Activated CD4-positive, alpha-beta memory T cell treated with anti-CD3 and anti-CD28 coated beads, Interleukin-2, amount 10 ng/mL, durations not matched to agents 7 days and 5 days (primary cell): ENCODE measurements at regions of chr14 and their contacts with region 1.

Region 1: GRCh38 chr14:74762917-74763802 is at the start of gene YLPM1:
- DNase-seq: peak; percentile 92
- H3K4me3 Mint-ChIP-seq: peak within 1 kb of the TSS; percentile 87
- H3K27ac Mint-ChIP-seq: peak within 1 kb of the TSS; percentile 77
- H3K4me1 Mint-ChIP-seq: peaks cover 43% of the 10 kb centered on the region
- H3K27me3 Mint-ChIP-seq: no peaks in the 10 kb centered on the region
- total RNA-seq, gene YLPM1: 52.3 to 55.4 TPM

Region 2: GRCh38 chr14:74377976-74378655 is 385.0 kb before region 1 on chr14:
- CTCF ChIA-PET with region 1: no interaction called
- POLR2A ChIA-PET with region 1: no interaction called
- DNase-seq: no peak
- H3K4me3 Mint-ChIP-seq: no peak overlapping the region
- H3K27ac Mint-ChIP-seq: no peak overlapping the region
- H3K4me1 Mint-ChIP-seq: no peaks in the 10 kb centered on the region
- H3K27me3 Mint-ChIP-seq: peaks cover 2% of the 10 kb centered on the region

Region 3: DNA sequence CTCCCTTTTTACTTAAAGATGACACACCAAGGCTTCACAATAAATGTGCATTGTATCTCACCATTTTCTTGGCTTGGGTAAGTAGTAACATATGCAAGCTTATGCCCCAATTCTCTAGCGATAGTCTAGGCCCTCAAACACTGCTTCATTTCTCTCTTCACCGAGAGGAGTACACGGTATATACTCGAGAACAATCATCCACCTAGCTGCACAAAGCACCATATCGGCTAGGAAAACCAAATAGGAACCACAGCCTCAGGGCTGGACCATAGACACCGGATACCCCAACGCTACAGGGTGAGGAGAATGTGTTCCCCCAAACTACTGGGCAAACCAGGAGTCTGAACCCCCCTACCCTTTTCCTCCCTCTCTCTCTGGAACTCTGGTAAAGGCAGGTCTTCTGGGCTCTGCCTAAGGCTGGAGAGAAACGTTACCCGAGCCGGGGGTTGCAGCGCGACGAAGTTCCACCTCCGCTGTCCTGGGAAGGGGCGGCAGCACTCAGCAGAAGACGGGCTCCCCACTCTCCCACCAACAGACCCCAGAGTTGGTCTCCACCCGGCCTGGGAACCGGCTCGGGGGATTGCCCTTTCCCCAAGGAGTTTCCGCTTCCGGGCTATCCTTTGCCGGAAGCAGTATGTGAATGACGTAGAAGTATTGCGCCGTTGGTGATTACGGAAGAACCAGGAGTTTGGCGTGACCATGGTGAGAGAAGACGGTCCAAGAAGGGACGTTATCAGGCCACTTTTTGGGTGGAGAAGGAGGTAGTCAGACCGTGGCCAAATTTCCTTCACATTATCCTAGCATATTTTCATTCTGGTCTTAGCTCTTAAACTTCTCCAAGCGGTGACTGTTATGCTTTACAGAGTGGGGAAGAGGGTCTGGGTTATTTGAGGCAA is 50.4 kb before region 1 on chr14 and contains the starts of genes AREL1 and FCF1:
- CTCF ChIA-PET with region 1: interaction called, 3 read pairs
- POLR2A ChIA-PET with region 1: interaction called, 13 read pairs
- DNase-seq: peak; percentile 87
- H3K4me3 Mint-ChIP-seq: peak within 1 kb of the TSS; percentile 95
- H3K27ac Mint-ChIP-seq: peak within 1 kb of the TSS; percentile 85
- H3K4me1 Mint-ChIP-seq: peaks cover 47% of the 10 kb centered on the region
- H3K27me3 Mint-ChIP-seq: no peaks in the 10 kb centered on the region
- total RNA-seq, gene AREL1: 42.4 to 43.1 TPM
- total RNA-seq, gene FCF1: 56.6 to 58.6 TPM

Region 4: DNA sequence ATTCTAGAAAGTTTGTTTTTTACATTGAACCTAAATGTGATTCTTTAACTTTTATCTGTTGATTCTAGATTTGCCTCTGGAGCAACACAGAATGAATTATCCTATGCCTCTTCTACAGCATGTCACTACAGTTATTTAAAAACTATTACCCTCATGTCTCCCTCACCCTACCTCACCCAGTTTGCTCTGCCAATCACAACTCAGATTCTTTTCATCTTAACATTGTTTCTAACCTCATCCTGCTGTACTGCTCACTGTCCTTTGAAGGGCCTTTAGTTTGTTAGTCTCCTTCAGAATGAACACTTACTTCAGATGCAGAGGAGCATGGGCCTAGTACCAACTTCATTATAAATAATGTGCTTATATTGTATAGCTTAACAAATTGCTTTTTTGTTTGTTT is 21.5 kb after region 1 on chr14:
- CTCF ChIA-PET with region 1: interaction called, 9 read pairs
- POLR2A ChIA-PET with region 1: interaction called, 11 read pairs
- DNase-seq: no peak
- H3K4me3 Mint-ChIP-seq: no peak overlapping the region
- H3K27ac Mint-ChIP-seq: no peak overlapping the region
- H3K4me1 Mint-ChIP-seq: peaks cover 10% of the 10 kb centered on the region
- H3K27me3 Mint-ChIP-seq: no peaks in the 10 kb centered on the region

Region 5: DNA sequence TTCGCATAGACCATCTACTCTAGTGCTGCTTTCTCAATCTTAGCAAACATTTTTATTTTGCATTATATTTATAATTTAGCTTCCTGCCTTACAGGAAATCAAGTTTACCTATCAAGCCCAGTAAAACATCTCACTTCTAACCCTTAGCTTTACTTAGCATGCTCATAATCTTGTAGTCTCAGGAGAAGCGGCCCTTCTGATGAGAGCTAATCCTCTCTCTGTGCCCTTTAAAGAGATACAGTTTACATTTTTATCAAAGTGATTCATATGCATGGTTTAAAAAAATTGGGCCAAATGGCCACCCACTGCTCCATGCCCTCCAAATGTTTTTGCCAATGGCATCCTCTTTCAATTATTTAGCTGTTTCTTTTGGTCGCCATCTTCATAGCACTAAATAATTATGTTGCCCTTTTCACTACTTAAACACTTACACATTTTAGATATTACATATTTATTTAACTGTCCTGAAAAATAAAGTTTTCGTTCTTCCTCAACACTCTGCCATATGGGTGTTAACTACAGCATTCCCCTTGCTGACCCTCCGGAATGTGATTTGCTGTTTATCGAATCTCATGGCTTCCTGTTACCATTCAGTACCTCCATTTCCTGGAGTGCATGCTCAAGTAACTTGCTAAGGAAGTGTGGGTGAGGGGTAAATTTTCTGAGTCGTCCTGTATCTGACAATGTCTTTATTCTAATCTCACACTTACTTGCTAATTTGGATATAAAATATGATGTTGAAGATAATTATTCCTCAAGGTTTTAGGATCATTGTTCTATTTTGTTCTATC is 29.3 kb after region 1 on chr14:
- CTCF ChIA-PET with region 1: interaction called, 11 read pairs
- POLR2A ChIA-PET with region 1: interaction called, 16 read pairs
- DNase-seq: no peak
- H3K4me3 Mint-ChIP-seq: peak overlapping the region; percentile 25
- H3K27ac Mint-ChIP-seq: peak overlapping the region; percentile 64
- H3K4me1 Mint-ChIP-seq: peaks cover 32% of the 10 kb centered on the region
- H3K27me3 Mint-ChIP-seq: no peaks in the 10 kb centered on the region